ENCODE measurements at regions of chr13 and their contacts with region 1.

Region 1: GRCh38 chr13:40974460-40975407 is 44.4 kb downstream of the ELF1 start:
- DNase-seq: no peak
- ATAC-seq: peak; percentile 78
- H3K4me3 ChIP-seq: peak overlapping the region; percentile 34
- H3K27ac ChIP-seq: peak overlapping the region; percentile 56
- H3K4me1 ChIP-seq: peaks cover 38% of the 10 kb centered on the region
- H3K27me3 ChIP-seq: no peaks in the 10 kb centered on the region
- CTCF ChIP-seq: peak; percentile 69 to 80 (median 70)
- EP300 ChIP-seq: no peak
- POLR2A ChIP-seq: 0 out of 2 replicates have a peak, but pooled peaks have one; percentile 16
- RAD21 ChIP-seq: peak; percentile 77

Region 2: GRCh38 chr13:40992678-40993518 is 18.2 kb after region 1 on chr13:
- CTCF ChIA-PET with region 1: interaction called, 160 read pairs
- POLR2A ChIA-PET with region 1: interaction called, 3 read pairs
- RAD21 ChIA-PET with region 1: interaction called, 36 read pairs
- SMC1A ChIA-PET with region 1: interaction called, 92 read pairs
- in situ Hi-C with region 1: no loop called
- intact Hi-C with region 1: no loop called
- DNase-seq: no peak
- ATAC-seq: peak; percentile 34
- H3K4me3 ChIP-seq: no peak overlapping the region; the same call in 1 of the 2 replicates
- H3K27ac ChIP-seq: peak overlapping the region; percentile 92
- H3K4me1 ChIP-seq: peaks cover 46% of the 10 kb centered on the region
- H3K27me3 ChIP-seq: no peaks in the 10 kb centered on the region
- CTCF ChIP-seq: peak; percentile 10 to 49 (median 12); a peak in 4 of 6 replicates
- EP300 ChIP-seq: no peak
- POLR2A ChIP-seq: no peak
- RAD21 ChIP-seq: peak; percentile 51

Region 3: GRCh38 chr13:41013835-41014234 is 39.1 kb after region 1 on chr13:
- CTCF ChIA-PET with region 1: interaction called, 52 read pairs
- POLR2A ChIA-PET with region 1: interaction called, 45 read pairs
- RAD21 ChIA-PET with region 1: interaction called, 62 read pairs
- SMC1A ChIA-PET with region 1: interaction called, 59 read pairs
- in situ Hi-C with region 1: no loop called
- intact Hi-C with region 1: loop called (anchors 2 kb)
- DNase-seq: no peak
- ATAC-seq: peak; percentile 46
- H3K4me3 ChIP-seq: peak overlapping the region; percentile 75
- H3K27ac ChIP-seq: no peak overlapping the region
- H3K4me1 ChIP-seq: peaks cover 18% of the 10 kb centered on the region
- H3K27me3 ChIP-seq: no peaks in the 10 kb centered on the region
- CTCF ChIP-seq: no peak
- EP300 ChIP-seq: no peak
- POLR2A ChIP-seq: no peak
- RAD21 ChIP-seq: no peak

Region 4: GRCh38 chr13:41025518-41025917 is 50.8 kb after region 1 on chr13:
- CTCF ChIA-PET with region 1: interaction called, 39 read pairs
- POLR2A ChIA-PET with region 1: interaction called, 8 read pairs
- RAD21 ChIA-PET with region 1: interaction called, 48 read pairs
- SMC1A ChIA-PET with region 1: interaction called, 59 read pairs
- in situ Hi-C with region 1: no loop called
- intact Hi-C with region 1: no loop called
- DNase-seq: no peak
- ATAC-seq: no peak
- H3K4me3 ChIP-seq: no peak overlapping the region
- H3K27ac ChIP-seq: no peak overlapping the region
- H3K4me1 ChIP-seq: no peaks in the 10 kb centered on the region
- H3K27me3 ChIP-seq: no peaks in the 10 kb centered on the region
- CTCF ChIP-seq: no peak
- EP300 ChIP-seq: no peak
- POLR2A ChIP-seq: no peak
- RAD21 ChIP-seq: no peak

Region 5: DNA sequence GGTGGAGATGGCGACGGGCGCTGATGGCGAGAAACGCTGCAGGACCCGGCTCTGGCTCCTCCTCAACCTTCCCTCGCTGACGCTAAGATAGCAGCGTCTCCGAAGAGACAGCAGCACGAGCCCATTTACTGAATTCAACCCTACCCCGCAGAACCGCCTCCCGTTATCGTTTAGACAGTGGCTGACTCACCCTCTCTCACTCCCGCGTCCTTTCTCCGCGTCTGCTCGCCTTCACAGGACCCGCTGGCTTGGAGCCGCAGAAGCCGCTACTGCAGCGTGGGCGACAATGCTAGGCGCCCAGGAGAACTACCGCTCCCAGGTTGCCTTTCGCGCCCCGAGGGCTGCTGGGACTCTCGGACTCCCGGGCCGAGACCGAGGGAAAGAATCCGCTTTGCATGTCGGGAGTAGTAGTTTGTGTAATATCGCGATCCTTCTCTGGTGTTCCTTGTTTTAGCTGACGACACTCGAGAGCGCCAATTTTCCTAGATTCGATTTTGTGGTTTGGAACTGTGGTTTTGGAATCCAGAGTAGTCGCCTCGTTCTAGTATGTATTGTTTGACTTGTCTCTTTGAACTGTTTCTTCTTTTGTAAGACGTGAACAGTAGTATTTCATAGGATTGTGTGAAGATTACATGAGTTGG is 157.9 kb after region 1 on chr13 and contains the start of gene KBTBD6:
- CTCF ChIA-PET with region 1: no interaction called
- POLR2A ChIA-PET with region 1: no interaction called
- RAD21 ChIA-PET with region 1: interaction called, 4 read pairs
- SMC1A ChIA-PET with region 1: no interaction called
- in situ Hi-C with region 1: no loop called
- intact Hi-C with region 1: loop called (anchors 10 kb)
- DNase-seq: peak; percentile 92
- ATAC-seq: peak; percentile 96
- H3K4me3 ChIP-seq: peak within 1 kb of the TSS; percentile 74
- H3K27ac ChIP-seq: peak within 1 kb of the TSS; percentile 71
- H3K4me1 ChIP-seq: peaks cover 8% of the 10 kb centered on the region
- H3K27me3 ChIP-seq: no peaks in the 10 kb centered on the region
- CTCF ChIP-seq: no peak
- EP300 ChIP-seq: no peak
- POLR2A ChIP-seq: peak; percentile 78
- RAD21 ChIP-seq: no peak
- polyA plus RNA-seq, gene KBTBD6: 1.9 to 2.4 TPM